Common myeloid progenitor, CD34-positive (primary cell): ENCODE measurements at regions of chr20 and their contacts with region 1.

Region 1: GRCh38 chr20:59972037-59972801 is 14.0 kb downstream of the CDH26 start:
- DNase-seq: no peak
- H3K4me3 ChIP-seq: no peak overlapping the region
- H3K27ac ChIP-seq: no peak overlapping the region
- H3K4me1 ChIP-seq: peaks cover 0 to 2% (median 0%) of the 10 kb centered on the region in 4 experiments
- H3K27me3 ChIP-seq: no peaks in the 10 kb centered on the region

Region 2: GRCh38 chr20:59948828-59949720 is 23.1 kb before region 1 on chr20:
- CTCF ChIA-PET with region 1: interaction called, 14 read pairs
- POLR2A ChIA-PET with region 1: no interaction called
- DNase-seq: peak; percentile 69 to 88 (median 85)
- H3K4me3 ChIP-seq: peak overlapping the region in 3 of 7 experiments; percentile 23 to 54 (median 53)
- H3K27ac ChIP-seq: no peak overlapping the region
- H3K4me1 ChIP-seq: peaks cover 9 to 27% (median 16%) of the 10 kb centered on the region in 4 experiments
- H3K27me3 ChIP-seq: no peaks in the 10 kb centered on the region

Region 3: GRCh38 chr20:59955132-59955796 is 17.0 kb before region 1 on chr20:
- CTCF ChIA-PET with region 1: interaction called, 14 read pairs
- POLR2A ChIA-PET with region 1: no interaction called
- DNase-seq: peak in 2 of 3 donors; percentile 58 to 66
- H3K4me3 ChIP-seq: no peak overlapping the region
- H3K27ac ChIP-seq: no peak overlapping the region
- H3K4me1 ChIP-seq: no peaks in the 10 kb centered on the region
- H3K27me3 ChIP-seq: no peaks in the 10 kb centered on the region

Region 4: DNA sequence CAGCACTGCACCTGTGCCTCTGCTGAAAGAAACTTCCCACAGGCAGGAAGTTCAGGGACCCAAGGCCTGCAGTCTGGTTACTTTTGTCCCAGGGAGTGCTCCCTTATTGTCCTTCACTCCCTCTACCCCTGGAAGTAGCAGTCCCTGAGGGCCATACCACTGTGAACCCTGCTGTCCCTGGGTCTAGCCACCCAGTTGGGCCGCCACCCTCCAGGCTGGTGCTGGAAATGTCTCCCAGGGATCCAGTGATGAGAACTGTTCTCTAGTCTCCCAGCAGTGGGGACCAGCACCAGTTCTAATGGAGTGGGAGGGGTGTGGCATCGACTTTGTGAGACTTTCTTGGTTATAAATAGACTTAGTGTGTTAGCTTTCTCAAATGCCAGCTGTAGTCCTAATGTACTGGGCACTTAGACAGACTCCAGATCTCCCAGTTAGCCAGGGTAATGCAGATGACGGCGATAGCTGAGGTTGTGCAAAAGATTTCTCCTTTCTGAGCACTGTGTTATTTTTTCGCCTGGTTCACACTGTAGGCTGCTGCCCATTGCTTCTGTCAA is 448.5 kb after region 1 on chr20:
- CTCF ChIA-PET with region 1: no interaction called
- POLR2A ChIA-PET with region 1: no interaction called
- DNase-seq: no peak
- H3K4me3 ChIP-seq: no peak overlapping the region
- H3K27ac ChIP-seq: no peak overlapping the region
- H3K4me1 ChIP-seq: no peaks in the 10 kb centered on the region
- H3K27me3 ChIP-seq: peaks cover 0 to 31% (median 14%) of the 10 kb centered on the region in 5 experiments